Heart left ventricle (tissue), 16 donors: ENCODE measurements at regions of chr10 and their contacts with region 1.

Region 1: GRCh38 chr10:118321724-118322575 is 20.2 kb downstream of the FAM204A start:
- DNase-seq: no peak
- ATAC-seq: no peak
- H3K4me3 ChIP-seq: no peak overlapping the region
- H3K27ac ChIP-seq: peak overlapping the region in 7 of 12 donors; percentile 4 to 34 (median 19)
- H3K4me1 ChIP-seq: peaks cover 0 to 22% (median 11%) of the 10 kb centered on the region in 12 donors
- H3K27me3 ChIP-seq: no peaks in the 10 kb centered on the region
- CTCF ChIP-seq: no peak
- POLR2A ChIP-seq: no peak

Region 2: DNA sequence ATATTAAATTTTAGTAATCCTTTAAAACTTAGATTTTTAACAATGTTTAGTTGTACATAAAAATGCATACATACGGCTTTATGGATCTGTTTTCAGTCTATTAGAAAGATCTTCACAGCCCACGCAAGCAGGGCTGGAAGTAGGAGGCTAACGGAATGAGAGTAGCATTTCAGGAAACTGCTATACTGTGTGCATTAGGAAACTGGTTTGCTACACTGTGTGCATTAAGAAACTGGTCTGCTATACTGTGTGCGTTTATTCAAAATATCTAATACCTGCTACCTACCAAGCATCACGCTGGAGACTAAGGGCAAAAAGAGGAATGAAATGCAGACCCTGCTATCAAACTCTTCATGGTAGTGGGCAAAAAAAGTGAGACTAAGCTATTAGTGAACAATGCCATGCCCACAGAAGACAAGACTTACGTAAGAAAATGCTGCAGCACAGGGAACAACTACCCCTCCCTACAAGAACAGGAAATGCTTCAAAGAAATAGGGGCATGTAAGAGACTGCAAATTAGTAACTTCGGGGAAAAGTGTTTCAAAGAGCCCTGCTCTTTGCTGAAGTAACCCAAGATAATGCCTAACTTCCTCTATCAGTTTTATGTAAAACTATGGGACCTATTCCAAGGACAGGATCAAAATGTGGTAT is 286.5 kb before region 1 on chr10:
- intact Hi-C with region 1: loop called in 1 of 10 experiments (anchors 10 kb)
- DNase-seq: no peak
- ATAC-seq: peak in 2 of 4 donors; percentile 56 to 58
- H3K4me3 ChIP-seq: no peak overlapping the region
- H3K27ac ChIP-seq: peak overlapping the region in 1 of 12 donors; percentile 73
- H3K4me1 ChIP-seq: peaks cover 0 to 43% (median 16%) of the 10 kb centered on the region in 12 donors
- H3K27me3 ChIP-seq: no peaks in the 10 kb centered on the region
- CTCF ChIP-seq: no peak
- POLR2A ChIP-seq: no peak